CD8-positive, alpha-beta T cell (primary cell): ENCODE measurements at regions of chr1 and their contacts with region 1.

Region 1: DNA sequence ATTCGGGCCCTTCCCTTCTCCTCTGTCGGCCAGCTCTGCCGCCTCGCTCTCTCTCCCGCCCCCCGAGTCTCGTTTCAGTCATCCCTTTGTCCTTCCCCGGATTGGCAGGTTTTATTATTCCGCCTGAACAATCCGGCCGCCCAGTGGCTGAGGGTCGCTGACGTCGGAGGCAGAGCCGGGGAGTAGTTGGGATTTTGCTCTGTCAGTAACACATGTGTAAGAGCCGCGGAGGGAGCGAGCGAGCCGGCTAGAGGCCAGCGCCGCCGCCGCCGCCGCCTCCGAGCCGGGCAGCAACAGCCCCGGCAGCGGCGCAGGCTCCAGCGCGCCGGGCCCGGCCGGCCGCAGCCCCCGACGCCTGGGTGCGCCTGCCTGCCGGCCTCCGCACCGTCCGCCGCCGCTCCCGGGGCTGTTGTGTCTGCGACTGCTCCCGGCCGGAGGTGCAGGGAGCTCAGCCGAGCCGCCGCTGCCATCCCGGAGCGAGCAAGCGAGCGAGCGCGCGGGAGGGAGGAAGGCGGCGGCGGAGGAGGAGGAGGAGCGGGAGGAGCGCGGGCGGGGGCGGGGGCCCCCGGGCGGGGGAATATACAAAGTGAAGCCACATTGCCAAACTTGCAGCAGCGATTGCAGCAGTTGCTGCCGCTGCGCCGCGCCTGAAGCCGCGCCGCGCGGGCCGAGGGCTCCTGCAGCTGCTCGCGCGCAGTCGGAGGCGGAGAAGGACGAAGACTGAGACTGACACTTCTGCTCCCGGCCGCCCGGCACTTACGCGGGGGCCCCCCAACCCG is at the start of gene LMO4:
- DNase-seq: peak; percentile 69 to 95 (median 85)
- ATAC-seq: peak; percentile 70
- H3K4me3 ChIP-seq: peak within 1 kb of the TSS; percentile 50 to 66
- H3K4me3 Mint-ChIP-seq: peak within 1 kb of the TSS; percentile 95
- H3K27ac ChIP-seq: peak within 1 kb of the TSS; percentile 66 to 79
- H3K27ac Mint-ChIP-seq: peak within 1 kb of the TSS; percentile 95
- H3K4me1 ChIP-seq: peaks cover 28% of the 10 kb centered on the region
- H3K4me1 Mint-ChIP-seq: peaks cover 46% of the 10 kb centered on the region
- H3K27me3 ChIP-seq: no peaks in the 10 kb centered on the region
- H3K27me3 Mint-ChIP-seq: no peaks in the 10 kb centered on the region
- CTCF ChIP-seq: no peak
- total RNA-seq, gene LMO4: 16.8 to 17.6 TPM

Region 2: DNA sequence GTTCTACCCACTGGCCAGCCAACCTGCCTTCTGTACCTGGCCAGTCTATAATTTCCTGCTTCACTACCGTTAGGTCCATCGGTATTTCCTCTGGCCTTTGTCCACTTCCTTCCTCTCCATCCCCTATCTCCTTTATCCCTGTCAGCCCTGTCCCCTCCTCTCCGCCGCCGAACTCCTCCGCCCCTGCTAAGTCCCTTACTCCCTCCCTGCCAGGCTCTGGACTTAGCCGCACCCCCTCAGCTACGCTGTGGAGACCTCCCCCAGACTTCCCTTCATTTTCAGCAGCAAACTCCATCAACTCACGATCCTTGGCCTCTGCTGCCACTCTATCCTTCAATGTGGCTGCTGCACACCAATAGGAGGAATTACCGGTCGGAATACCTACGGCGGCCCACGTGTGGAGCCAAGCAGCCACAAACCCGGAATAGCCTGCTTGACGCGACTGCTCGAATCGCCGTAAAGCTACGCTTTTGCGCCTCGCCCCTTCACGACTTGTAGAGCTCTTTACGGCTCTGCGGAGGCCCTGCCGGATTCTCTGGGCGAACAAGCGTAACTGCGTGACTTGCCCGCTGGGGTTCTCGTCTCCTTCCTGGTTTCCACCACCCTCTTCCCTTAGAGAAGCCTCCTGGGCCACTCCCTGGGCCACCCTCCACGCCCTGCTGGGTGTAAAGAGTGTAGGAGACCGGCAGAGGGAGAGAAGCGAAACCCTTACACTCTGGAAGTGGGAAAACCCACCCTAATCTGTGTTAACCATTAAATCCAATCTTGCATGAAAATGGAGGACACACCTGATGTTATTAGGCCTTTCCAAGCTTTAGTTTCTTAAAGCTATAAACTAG is 1620.3 kb before region 1 on chr1 and contains the start of gene ZNHIT6:
- CTCF ChIA-PET with region 1: no interaction called
- POLR2A ChIA-PET with region 1: no interaction called
- intact Hi-C with region 1: loop called (anchors 5 to 10 kb)
- DNase-seq: peak; percentile 72 to 95 (median 84)
- ATAC-seq: peak; percentile 95
- H3K4me3 ChIP-seq: peak within 1 kb of the TSS; percentile 89 to 93
- H3K4me3 Mint-ChIP-seq: no peak within 1 kb of the TSS
- H3K27ac ChIP-seq: peak within 1 kb of the TSS; percentile 67 to 79
- H3K27ac Mint-ChIP-seq: no peak within 1 kb of the TSS
- H3K4me1 ChIP-seq: peaks cover 17% of the 10 kb centered on the region
- H3K4me1 Mint-ChIP-seq: peaks cover 30% of the 10 kb centered on the region
- H3K27me3 ChIP-seq: no peaks in the 10 kb centered on the region
- H3K27me3 Mint-ChIP-seq: no peaks in the 10 kb centered on the region
- CTCF ChIP-seq: no peak
- total RNA-seq, gene ZNHIT6: 14.4 to 15.3 TPM

Region 3: DNA sequence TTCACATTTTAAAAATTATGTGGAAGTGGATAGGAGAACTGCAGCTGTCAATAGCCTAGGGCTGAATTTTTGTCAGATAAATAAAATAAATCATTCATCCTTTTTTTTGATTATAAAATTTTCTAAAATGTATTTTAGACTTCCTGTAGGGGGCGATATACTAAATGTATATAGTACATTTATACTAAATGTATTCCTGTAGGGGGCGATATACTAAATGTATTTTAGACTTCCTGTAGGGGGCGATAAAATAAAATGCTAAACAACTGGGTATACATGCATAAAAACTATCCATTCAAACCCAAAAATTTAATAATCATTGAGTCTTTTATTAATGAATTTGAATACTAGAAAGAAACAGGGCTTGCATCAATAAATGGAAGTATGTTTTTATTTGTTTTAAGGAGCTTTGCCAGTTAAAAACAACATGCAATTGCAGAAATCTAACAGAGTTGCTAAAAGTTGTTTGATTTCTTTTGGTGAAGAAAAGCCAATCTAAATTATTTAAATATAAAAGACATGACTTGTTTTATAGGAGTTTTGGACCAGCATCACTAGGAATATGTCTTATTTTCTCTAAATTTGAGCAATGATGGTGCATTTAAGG is 828.4 kb before region 1 on chr1:
- CTCF ChIA-PET with region 1: no interaction called
- POLR2A ChIA-PET with region 1: no interaction called
- intact Hi-C with region 1: loop called in 1 of 2 experiments (anchors 10 kb)
- DNase-seq: peak in 2 of 9 experiments; percentile 43 to 60
- ATAC-seq: peak; percentile 63
- H3K4me3 ChIP-seq: no peak overlapping the region
- H3K4me3 Mint-ChIP-seq: no peak overlapping the region
- H3K27ac ChIP-seq: no peak overlapping the region
- H3K27ac Mint-ChIP-seq: no peak overlapping the region
- H3K4me1 ChIP-seq: peaks cover 7% of the 10 kb centered on the region
- H3K4me1 Mint-ChIP-seq: peaks cover 8% of the 10 kb centered on the region
- H3K27me3 ChIP-seq: peaks cover 0 to 2% of the 10 kb centered on the region in 2 experiments
- H3K27me3 Mint-ChIP-seq: peaks cover 10% of the 10 kb centered on the region
- CTCF ChIP-seq: peak; percentile 100

Region 4: DNA sequence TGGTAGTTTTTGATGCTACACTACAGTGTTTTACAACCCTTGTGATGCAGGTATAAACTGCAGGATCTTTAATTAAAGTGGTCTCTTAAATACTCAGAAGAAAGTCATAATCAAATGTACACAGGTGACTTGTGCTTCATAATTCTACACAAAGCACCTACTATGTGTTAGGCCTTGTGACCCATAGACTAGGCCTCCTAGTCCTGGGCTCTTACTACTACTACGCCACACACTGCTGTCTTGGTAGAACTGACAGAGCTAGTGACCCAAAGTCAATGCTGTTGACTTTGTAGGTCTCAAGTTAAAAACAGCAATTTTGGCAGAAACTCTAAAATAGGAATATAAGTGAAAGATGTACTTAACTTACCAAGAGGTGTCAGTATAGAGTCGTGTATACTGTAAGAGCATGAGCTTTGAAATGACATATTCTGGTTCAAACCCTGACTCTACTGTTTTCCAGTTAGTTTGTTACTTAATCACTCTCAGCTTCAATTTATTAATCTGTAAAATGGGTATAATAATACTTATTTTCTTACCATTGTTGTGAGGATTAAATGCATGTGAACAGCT is 48.4 kb before region 1 on chr1:
- CTCF ChIA-PET with region 1: no interaction called
- POLR2A ChIA-PET with region 1: no interaction called
- intact Hi-C with region 1: no loop called
- DNase-seq: no peak
- ATAC-seq: no peak
- H3K4me3 ChIP-seq: no peak overlapping the region
- H3K4me3 Mint-ChIP-seq: no peak overlapping the region
- H3K27ac ChIP-seq: no peak overlapping the region
- H3K27ac Mint-ChIP-seq: no peak overlapping the region
- H3K4me1 ChIP-seq: no peaks in the 10 kb centered on the region
- H3K4me1 Mint-ChIP-seq: no peaks in the 10 kb centered on the region
- H3K27me3 ChIP-seq: no peaks in the 10 kb centered on the region
- H3K27me3 Mint-ChIP-seq: peaks cover 3% of the 10 kb centered on the region
- CTCF ChIP-seq: no peak

Region 5: DNA sequence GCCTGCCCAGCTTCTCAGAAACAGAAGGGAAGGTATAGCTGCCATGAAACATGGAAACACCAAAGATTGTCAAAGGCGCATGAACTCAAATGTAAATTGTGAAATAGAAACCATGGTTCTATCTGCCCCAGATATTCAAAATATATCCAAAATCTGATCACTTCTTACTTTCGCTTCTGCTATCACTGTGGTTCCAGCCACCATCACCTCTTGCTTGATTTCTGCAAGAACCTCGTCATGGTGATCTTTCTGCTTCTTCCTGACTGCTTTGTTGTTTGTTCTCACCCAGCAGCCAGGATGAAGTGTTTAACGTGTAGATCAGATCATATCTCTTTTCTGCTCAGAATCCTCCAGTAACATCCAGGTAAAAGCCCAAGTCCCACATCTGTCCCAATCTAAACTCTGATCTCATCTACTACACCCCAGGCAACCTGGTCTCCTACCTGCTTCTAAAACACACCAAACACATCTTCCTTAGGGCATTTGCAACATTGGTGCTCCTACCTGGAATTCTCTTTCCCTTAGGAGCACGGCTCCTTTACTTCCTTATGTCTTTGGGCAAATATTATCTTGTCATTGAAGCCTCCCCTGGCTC is 10.3 kb before region 1 on chr1:
- CTCF ChIA-PET with region 1: interaction called, 11 read pairs
- POLR2A ChIA-PET with region 1: interaction called, 4 read pairs
- intact Hi-C with region 1: no loop called
- DNase-seq: peak in 2 of 9 experiments; percentile 20 to 49
- ATAC-seq: peak; percentile 20
- H3K4me3 ChIP-seq: no peak overlapping the region
- H3K4me3 Mint-ChIP-seq: no peak overlapping the region
- H3K27ac ChIP-seq: no peak overlapping the region
- H3K27ac Mint-ChIP-seq: no peak overlapping the region
- H3K4me1 ChIP-seq: no peaks in the 10 kb centered on the region
- H3K4me1 Mint-ChIP-seq: peaks cover 4% of the 10 kb centered on the region
- H3K27me3 ChIP-seq: no peaks in the 10 kb centered on the region
- H3K27me3 Mint-ChIP-seq: peaks cover 5% of the 10 kb centered on the region
- CTCF ChIP-seq: no peak

Region 6: DNA sequence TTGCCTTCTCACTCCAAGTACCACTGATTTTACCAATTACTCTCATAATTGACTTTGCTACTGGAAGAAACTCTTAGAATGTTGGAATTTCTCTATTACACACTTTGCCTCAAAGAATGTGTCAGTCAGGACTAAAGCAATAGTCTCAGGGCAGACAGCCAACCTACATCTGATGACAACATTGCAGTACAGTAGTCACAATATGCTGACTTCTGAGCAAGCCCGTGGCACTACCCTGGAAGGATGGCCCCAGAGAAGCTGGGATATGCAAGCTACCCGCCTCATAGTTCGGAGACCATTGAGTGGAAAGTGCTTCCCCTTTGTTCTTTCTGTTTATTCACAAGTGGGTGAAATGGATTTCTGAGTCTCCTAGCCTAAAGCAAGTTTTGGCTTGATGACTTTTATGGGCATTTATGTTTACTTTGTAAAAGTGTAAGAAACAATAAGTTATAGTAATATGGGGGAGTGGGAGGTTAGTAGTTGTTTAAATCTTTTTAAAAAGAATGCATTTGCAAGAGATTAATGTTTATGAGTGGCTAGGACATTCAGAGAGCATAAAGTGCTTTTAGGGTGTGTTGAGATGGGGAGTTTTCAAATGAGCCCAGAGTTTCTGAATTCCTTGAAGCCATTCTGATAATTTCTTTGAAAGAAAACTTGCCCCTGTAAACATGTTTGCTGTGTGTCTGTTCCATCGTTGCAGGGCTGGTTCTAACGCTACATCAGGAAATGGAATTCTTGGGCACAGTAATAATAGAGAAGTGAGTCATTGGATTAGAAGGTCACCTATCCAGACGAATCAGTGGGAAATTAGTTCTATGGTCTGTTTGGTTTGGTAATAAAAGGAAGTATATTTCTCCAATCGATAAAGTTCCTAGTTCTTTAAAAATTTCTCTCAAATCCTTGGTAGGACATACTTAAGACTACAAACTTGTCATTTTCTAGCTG is 64.1 kb after region 1 on chr1:
- CTCF ChIA-PET with region 1: interaction called, 3 read pairs
- POLR2A ChIA-PET with region 1: no interaction called
- intact Hi-C with region 1: loop called in 1 of 2 experiments (anchors 5 kb)
- DNase-seq: no peak
- ATAC-seq: no peak
- H3K4me3 ChIP-seq: no peak overlapping the region
- H3K4me3 Mint-ChIP-seq: no peak overlapping the region
- H3K27ac ChIP-seq: no peak overlapping the region
- H3K27ac Mint-ChIP-seq: no peak overlapping the region
- H3K4me1 ChIP-seq: no peaks in the 10 kb centered on the region
- H3K4me1 Mint-ChIP-seq: no peaks in the 10 kb centered on the region
- H3K27me3 ChIP-seq: no peaks in the 10 kb centered on the region
- H3K27me3 Mint-ChIP-seq: no peaks in the 10 kb centered on the region
- CTCF ChIP-seq: no peak

Region 7: GRCh38 chr1:87501738-87502137 is 173.3 kb after region 1 on chr1:
- CTCF ChIA-PET with region 1: no interaction called
- POLR2A ChIA-PET with region 1: no interaction called
- intact Hi-C with region 1: loop called in 1 of 2 experiments (anchors 2 kb)
- DNase-seq: peak in 2 of 9 experiments; percentile 2 to 7
- ATAC-seq: no peak
- H3K4me3 ChIP-seq: no peak overlapping the region
- H3K4me3 Mint-ChIP-seq: no peak overlapping the region
- H3K27ac ChIP-seq: no peak overlapping the region
- H3K27ac Mint-ChIP-seq: no peak overlapping the region
- H3K4me1 ChIP-seq: no peaks in the 10 kb centered on the region
- H3K4me1 Mint-ChIP-seq: no peaks in the 10 kb centered on the region
- H3K27me3 ChIP-seq: no peaks in the 10 kb centered on the region
- H3K27me3 Mint-ChIP-seq: no peaks in the 10 kb centered on the region
- CTCF ChIP-seq: no peak

Region 8: DNA sequence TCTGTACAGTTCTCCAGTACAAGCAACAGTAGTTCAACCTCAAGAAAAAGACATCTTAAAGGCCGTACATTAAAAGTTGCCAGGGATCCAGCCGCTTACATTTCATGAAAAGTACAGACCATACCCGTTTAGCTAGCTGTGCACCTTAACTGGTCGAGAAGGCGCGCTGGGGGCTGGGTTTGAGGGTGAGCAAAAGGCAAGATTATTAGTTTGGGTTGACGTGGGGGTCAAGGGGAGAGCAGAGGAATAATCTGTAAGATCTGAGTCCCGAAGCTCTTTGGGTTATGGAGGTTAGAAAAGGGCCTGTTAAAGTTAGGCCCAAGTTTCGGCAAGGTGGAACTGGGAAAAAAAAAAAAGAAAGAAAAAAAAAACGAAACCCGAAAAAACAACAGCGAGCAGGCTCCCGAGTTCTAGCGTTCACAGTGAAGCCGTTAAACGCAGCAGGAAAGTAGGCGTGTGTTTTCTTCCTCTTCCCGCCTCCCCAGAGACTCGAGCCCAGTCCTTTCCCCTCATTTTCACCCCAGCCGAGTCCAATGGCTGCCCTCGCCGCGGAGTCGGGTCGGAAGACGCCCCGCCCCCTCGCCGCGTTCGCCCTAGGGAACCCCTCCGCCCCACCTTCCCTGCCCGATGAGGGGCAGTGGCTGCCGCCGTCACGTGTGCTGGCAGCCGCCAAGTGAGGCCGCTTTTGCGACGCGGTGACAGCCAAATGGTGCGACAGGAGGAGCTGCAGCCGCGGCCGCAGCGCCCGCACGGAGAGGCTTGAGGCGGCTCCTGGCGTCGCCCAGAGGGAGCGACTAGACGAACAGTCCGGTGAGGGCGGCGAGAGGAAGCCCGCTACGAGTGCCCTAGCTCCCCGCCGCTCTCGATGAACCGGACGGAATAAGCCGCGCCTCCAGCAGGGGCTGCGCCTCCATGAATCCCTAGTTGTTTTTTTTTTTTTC is 1355.3 kb after region 1 on chr1 and contains the start of gene PKN2:
- CTCF ChIA-PET with region 1: no interaction called
- POLR2A ChIA-PET with region 1: no interaction called
- intact Hi-C with region 1: loop called (anchors 1 to 5 kb)
- DNase-seq: peak; percentile 92 to 100 (median 98)
- ATAC-seq: peak; percentile 93
- H3K4me3 ChIP-seq: peak within 1 kb of the TSS; percentile 51 to 85
- H3K4me3 Mint-ChIP-seq: peak within 1 kb of the TSS; percentile 91
- H3K27ac ChIP-seq: peak within 1 kb of the TSS; percentile 94
- H3K27ac Mint-ChIP-seq: peak within 1 kb of the TSS; percentile 96
- H3K4me1 ChIP-seq: peaks cover 32% of the 10 kb centered on the region
- H3K4me1 Mint-ChIP-seq: peaks cover 34% of the 10 kb centered on the region
- H3K27me3 ChIP-seq: no peaks in the 10 kb centered on the region
- H3K27me3 Mint-ChIP-seq: no peaks in the 10 kb centered on the region
- CTCF ChIP-seq: peak; percentile 16
- total RNA-seq, gene PKN2: 42.3 to 43.7 TPM